Motor neuron (in vitro differentiated cells): ENCODE measurements at regions of chr21 and their contacts with region 1.

Region 1: GRCh38 chr21:32403201-32403777 is 9.2 kb upstream of the EVA1C start:
- ATAC-seq: peak; percentile 66 to 98 (median 77)
- H3K4me3 ChIP-seq: no peak overlapping the region
- H3K27ac ChIP-seq: no peak overlapping the region
- H3K4me1 ChIP-seq: no peaks in the 10 kb centered on the region

Region 2: GRCh38 chr21:32114419-32115035 is 288.8 kb before region 1 on chr21:
- in situ Hi-C with region 1: no loop called
- ATAC-seq: peak in 3 of 8 experiments; percentile 41 to 66 (median 63)
- H3K4me3 ChIP-seq: no peak overlapping the region
- H3K27ac ChIP-seq: no peak overlapping the region
- H3K4me1 ChIP-seq: no peaks in the 10 kb centered on the region

Region 3: DNA sequence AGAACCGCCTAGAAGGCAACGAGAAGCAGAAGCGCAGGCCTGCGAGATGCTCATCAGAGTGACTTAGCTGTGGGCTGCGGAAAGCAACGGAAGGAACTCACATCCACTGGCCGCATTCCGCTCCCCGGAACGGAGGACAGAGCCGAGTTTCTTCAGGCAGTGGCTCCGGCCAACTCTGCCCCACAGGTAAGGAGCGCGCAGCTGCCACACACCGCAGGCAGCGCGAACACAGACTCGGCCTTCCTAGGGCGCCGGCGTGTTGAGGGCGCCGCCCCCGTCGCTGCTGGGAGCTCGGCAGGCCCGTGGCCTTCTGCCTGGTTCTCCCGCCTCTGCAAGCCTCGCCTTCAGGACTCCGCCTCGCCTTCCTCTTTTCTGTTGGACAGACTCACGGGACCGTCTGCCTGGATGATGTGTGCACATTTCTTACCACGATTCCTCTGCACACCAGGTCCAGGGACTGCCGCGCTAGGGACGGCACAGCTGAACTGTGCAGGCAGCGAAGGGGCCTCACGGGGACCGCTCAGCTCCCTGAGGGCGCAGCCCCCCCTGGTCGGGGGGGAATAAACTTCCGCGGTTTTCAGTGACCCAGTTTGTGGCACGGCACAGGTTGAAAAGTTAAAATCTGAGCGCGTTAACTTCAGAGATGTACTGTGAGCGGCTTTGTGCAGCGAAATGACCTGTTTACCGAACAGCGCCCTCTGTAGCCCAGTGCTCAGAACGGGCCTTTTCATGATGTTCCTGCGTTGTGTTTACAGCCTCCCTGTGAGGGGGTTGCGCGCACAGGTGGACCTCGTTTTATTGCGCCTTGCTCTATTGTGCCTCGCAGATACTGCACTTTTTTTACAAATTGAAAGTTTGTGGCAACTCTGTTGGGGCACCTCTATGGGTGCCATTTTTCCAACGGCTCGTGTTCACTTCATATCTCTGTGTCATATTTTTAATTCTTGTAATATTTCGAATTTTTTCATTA is 166.3 kb after region 1 on chr21:
- in situ Hi-C with region 1: loop called in 3 of 9 experiments (anchors 10 to 25 kb)
- ATAC-seq: peak; percentile 89 to 97 (median 93)
- H3K4me3 ChIP-seq: peak overlapping the region; percentile 38 to 47 (median 46)
- H3K27ac ChIP-seq: peak overlapping the region in 1 of 2 donors; percentile 20
- H3K4me1 ChIP-seq: peaks cover 0 to 2% of the 10 kb centered on the region in 2 donors

Region 4: DNA sequence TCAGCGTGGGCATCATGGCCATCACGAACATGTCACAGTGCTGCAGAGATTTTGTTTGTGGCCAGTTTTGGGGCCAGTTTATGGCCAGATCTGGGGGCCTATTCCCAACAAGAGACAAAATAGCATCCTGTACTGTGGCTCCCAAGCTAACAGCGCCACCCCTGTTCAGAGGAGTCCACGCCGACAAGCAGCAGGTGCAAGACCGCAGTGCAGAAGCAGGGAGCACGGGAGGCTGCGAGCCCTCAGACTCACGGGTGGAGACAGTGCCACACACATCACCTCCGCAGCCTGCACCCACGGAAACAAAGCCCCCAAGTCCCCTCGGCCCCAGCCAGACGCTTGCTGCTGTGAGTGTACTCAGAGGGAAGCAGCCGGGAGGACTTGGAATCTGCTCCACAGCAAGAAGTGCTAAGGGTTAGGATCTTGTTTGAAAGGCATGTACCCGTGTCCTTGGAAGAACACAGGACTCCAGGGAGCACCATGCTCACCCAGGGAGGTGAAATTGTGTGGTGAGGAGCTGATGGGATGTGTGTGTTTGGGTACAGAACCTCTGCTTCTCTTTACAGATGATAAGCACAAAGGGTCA is 174.9 kb after region 1 on chr21:
- in situ Hi-C with region 1: loop called in 6 of 9 experiments (anchors 10 to 25 kb)
- ATAC-seq: peak in 4 of 8 experiments; percentile 33 to 72 (median 41)
- H3K4me3 ChIP-seq: no peak overlapping the region
- H3K27ac ChIP-seq: no peak overlapping the region
- H3K4me1 ChIP-seq: no peaks in the 10 kb centered on the region

Region 5: GRCh38 chr21:32604464-32604863 is 201.2 kb after region 1 on chr21:
- in situ Hi-C with region 1: loop called in 5 of 9 experiments (anchors 10 to 25 kb)
- ATAC-seq: no peak
- H3K4me3 ChIP-seq: no peak overlapping the region
- H3K27ac ChIP-seq: no peak overlapping the region
- H3K4me1 ChIP-seq: no peaks in the 10 kb centered on the region

Region 6: GRCh38 chr21:32612075-32612998 is 209.0 kb after region 1 on chr21 and contains the start of gene CFAP298:
- in situ Hi-C with region 1: loop called in 2 of 9 experiments (anchors 10 to 25 kb)
- ATAC-seq: peak; percentile 89 to 97 (median 96)
- H3K4me3 ChIP-seq: peak within 1 kb of the TSS; percentile 55 to 89 (median 70)
- H3K27ac ChIP-seq: peak within 1 kb of the TSS; percentile 76 to 94
- H3K4me1 ChIP-seq: peaks cover 4 to 7% of the 10 kb centered on the region in 2 donors
- total RNA-seq, gene CFAP298: 24.2 to 267 (median 33.8) TPM